Adrenal gland (tissue), 19 donors: ENCODE measurements at regions of chr5 and their contacts with region 1.

Region 1: GRCh38 chr5:58498340-58498942 is 7.2 kb downstream of the GAPT start:
- DNase-seq: peak; percentile 36 to 73 (median 46)
- H3K4me3 ChIP-seq: no peak overlapping the region
- H3K27ac ChIP-seq: no peak overlapping the region
- H3K4me1 ChIP-seq: no peaks in the 10 kb centered on the region
- H3K27me3 ChIP-seq: no peaks in the 10 kb centered on the region
- CTCF ChIP-seq: peak; percentile 66 to 83 (median 76)
- POLR2A ChIP-seq: no peak

Region 2: DNA sequence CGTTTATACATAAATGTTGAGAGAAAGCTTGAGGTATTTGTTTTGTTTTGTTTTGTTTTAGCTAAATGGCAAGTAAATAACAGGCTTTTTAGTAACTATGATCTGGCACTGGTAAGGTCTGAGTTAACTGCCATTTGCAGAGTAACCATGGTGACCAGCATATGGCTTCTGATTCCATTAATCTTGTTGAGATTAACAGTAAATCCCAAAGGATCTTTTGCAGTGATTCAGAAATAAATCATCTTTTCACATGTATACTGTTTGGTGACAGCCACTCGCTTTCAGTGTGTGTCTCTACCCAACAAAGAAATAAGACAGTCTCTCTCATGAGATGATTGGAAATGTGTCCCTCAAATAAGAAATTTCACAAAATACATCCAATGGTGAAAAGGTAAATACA is 320.0 kb after region 1 on chr5:
- intact Hi-C with region 1: loop called in 1 of 2 experiments (anchors 10 kb)
- DNase-seq: no peak
- H3K4me3 ChIP-seq: no peak overlapping the region
- H3K27ac ChIP-seq: no peak overlapping the region
- H3K4me1 ChIP-seq: no peaks in the 10 kb centered on the region
- H3K27me3 ChIP-seq: no peaks in the 10 kb centered on the region
- CTCF ChIP-seq: no peak
- POLR2A ChIP-seq: no peak

Region 3: DNA sequence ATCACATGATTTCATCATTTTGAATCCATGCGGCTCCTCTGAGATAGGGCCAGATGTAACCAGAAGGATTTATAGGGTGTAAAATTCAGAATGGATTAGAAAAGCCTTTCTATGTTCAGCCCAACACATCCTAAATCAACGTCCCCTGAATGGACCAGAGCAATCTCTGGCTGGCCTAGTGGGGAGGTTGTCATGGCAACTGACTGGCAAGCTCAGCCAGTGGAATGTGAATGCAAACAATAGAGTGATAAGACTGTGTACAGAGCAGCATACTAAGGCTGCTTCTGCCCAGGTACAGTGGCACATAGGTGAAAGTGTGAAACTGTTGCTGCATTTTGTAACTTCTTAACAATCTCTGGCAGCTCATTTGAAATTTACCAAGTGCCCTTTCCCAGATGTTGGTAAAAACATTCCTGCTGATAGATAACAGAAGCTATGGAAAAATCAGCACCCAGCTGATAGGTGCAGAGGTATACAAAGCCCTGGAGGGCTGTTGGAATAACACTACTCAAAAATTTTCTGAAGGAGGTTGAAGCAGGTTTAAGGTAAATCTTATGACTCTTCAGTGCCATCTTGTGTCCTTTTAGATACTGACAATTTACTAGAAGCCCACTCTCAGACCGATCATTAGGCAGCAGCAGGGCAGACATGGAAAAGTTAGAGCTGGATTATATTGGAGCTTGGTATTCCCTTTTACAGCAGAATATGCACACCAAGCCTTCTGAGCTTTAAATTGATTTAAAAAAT is 351.7 kb after region 1 on chr5:
- intact Hi-C with region 1: loop called (anchors 5 kb)
- DNase-seq: no peak
- H3K4me3 ChIP-seq: no peak overlapping the region
- H3K27ac ChIP-seq: no peak overlapping the region
- H3K4me1 ChIP-seq: no peaks in the 10 kb centered on the region
- H3K27me3 ChIP-seq: no peaks in the 10 kb centered on the region
- CTCF ChIP-seq: peak in 5 of 6 experiments; percentile 41 to 69 (median 59)
- POLR2A ChIP-seq: no peak